ENCODE measurements at regions of chr4 and their contacts with region 1.

Region 1: DNA sequence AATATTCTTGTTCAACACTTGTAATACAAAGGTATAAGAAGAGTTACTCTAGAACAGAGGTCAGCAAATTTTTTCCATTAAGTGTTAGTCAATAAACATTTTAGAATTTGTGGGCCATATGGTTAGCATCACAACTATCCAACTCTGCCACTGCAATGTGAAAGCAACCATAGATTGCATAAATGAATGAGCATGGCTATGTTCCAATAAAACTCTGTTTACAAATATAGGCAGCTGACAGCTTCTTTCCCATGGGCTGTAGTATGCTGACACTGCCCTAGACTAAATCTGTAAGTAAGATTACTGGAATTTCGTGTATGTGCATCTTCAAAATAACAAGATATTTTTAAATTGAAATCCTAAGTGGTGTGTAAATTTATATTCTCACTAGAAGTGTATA is 73.7 kb downstream of the GABRA2 start:
- DNase-seq: no peak
- ATAC-seq: no peak
- H3K4me3 Mint-ChIP-seq: no peak overlapping the region
- H3K27ac Mint-ChIP-seq: no peak overlapping the region
- H3K4me1 Mint-ChIP-seq: no peaks in the 10 kb centered on the region
- H3K27me3 Mint-ChIP-seq: no peaks in the 10 kb centered on the region
- CTCF ChIP-seq: no peak

Region 2: GRCh38 chr4:45701621-45702020 is 614.6 kb before region 1 on chr4:
- CTCF ChIA-PET with region 1: no interaction called
- POLR2A ChIA-PET with region 1: no interaction called
- intact Hi-C with region 1: loop called (anchors 5 kb)
- DNase-seq: no peak
- ATAC-seq: no peak
- H3K4me3 Mint-ChIP-seq: no peak overlapping the region
- H3K27ac Mint-ChIP-seq: no peak overlapping the region
- H3K4me1 Mint-ChIP-seq: no peaks in the 10 kb centered on the region
- H3K27me3 Mint-ChIP-seq: no peaks in the 10 kb centered on the region
- CTCF ChIP-seq: no peak